Caco-2 (cell line): ENCODE measurements at regions of chr19 and their contacts with region 1.

Region 1: GRCh38 chr19:37655689-37656371 is 565 bp upstream of the ZFP30 start:
- DNase-seq: peak; percentile 91 to 93
- H3K4me3 ChIP-seq: peak overlapping the region; percentile 100
- H3K4me3 Mint-ChIP-seq: peak overlapping the region; percentile 84
- H3K27ac Mint-ChIP-seq: peak overlapping the region; percentile 97
- H3K4me1 ChIP-seq: no peaks in the 10 kb centered on the region; the same call in 1 of the 2 replicates
- H3K4me1 Mint-ChIP-seq: peaks cover 20% of the 10 kb centered on the region
- H3K27me3 ChIP-seq: no peaks in the 10 kb centered on the region
- H3K27me3 Mint-ChIP-seq: no peaks in the 10 kb centered on the region
- CTCF ChIP-seq: peak in 1 of 2 experiments; percentile 19

Region 2: DNA sequence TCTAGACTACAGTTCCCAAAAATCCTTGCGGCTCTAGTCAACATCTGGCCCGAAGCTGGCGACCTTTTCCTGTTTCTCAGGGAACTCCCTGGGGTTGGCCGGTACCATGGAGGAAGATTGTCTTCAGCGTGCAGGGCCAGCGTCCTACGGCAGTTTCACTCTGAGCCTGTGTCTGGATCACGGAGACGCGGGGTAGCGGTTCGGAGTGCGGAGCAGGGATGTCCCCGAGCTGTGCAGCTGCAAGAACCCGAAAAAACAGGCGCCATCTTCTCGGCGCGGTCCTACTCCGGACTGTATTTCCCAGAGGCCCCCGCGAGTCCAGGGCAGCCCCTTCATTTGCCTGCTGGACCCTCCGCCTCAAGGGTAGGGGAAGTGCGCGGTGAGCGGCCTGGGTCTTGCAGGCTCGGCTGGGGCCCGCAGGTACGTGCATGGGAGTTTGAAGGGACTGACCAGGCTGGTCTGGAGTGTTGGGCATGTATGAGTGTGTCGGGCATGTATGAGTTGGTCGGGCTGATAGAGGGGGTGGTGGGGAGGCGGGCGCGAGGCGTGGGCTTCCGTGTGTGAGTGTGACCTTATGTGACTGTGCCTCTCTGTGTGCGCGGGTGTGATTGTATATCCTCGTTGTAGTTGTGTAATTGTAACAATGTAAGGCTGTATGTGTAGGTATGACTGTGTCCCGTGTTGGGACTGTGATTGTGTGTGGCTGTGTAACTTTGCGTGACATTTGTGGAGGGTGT is 437.8 kb before region 1 on chr19 and contains the start of gene ZNF383:
- CTCF ChIA-PET with region 1: no interaction called
- POLR2A ChIA-PET with region 1: no interaction called
- intact Hi-C with region 1: loop called (anchors 5 kb)
- DNase-seq: peak; percentile 94 to 96
- H3K4me3 ChIP-seq: peak within 1 kb of the TSS; percentile 88
- H3K4me3 Mint-ChIP-seq: peak within 1 kb of the TSS; percentile 86
- H3K27ac Mint-ChIP-seq: peak within 1 kb of the TSS; percentile 92
- H3K4me1 ChIP-seq: no peaks in the 10 kb centered on the region
- H3K4me1 Mint-ChIP-seq: peaks cover 11% of the 10 kb centered on the region
- H3K27me3 ChIP-seq: no peaks in the 10 kb centered on the region
- H3K27me3 Mint-ChIP-seq: no peaks in the 10 kb centered on the region
- CTCF ChIP-seq: no peak
- total RNA-seq, gene ZNF383: 4.4 and 5.5 TPM in 2 replicates

Region 3: GRCh38 chr19:37413243-37414084 is 242.4 kb before region 1 on chr19:
- CTCF ChIA-PET with region 1: no interaction called
- POLR2A ChIA-PET with region 1: no interaction called
- intact Hi-C with region 1: no loop called
- DNase-seq: no peak
- H3K4me3 ChIP-seq: no peak overlapping the region
- H3K4me3 Mint-ChIP-seq: no peak overlapping the region
- H3K27ac Mint-ChIP-seq: no peak overlapping the region
- H3K4me1 ChIP-seq: no peaks in the 10 kb centered on the region
- H3K4me1 Mint-ChIP-seq: no peaks in the 10 kb centered on the region
- H3K27me3 ChIP-seq: no peaks in the 10 kb centered on the region
- H3K27me3 Mint-ChIP-seq: no peaks in the 10 kb centered on the region
- CTCF ChIP-seq: no peak

Region 4: DNA sequence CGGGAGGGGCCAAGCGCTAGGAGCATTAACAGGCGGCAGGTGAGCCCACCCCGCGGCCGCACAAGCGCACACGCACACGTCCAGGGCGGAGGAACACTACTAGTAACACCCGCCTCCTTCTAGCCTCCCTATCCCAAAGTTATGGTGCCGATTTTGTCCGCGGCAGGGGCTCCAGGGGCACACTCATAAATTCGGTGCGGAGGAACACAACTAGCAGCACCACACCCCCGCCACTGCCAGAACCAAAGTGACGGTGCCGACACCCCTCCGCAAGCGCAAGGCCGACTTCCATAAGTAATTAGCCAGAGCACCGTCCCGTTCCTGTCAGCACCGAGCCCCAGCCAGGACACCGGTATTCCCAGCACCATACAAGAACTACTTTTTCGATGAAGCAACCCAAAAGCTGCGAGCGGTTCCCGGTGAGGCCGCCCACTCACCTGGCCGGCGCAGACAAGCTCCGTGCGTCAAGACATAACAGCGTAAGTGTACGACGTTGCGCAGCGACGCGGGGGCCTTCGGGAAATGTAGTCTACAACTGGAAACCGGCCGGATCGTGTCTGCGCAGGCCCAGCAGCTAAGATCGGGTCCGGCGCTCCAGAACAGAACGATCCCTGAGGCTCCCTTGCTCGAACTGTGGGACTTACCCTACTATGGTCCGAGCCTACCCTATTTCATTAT is 61.4 kb before region 1 on chr19 and contains the starts of genes ZNF540 and ZNF571:
- CTCF ChIA-PET with region 1: no interaction called
- POLR2A ChIA-PET with region 1: no interaction called
- intact Hi-C with region 1: loop called (anchors 1 kb)
- DNase-seq: peak; percentile 93 to 95
- H3K4me3 ChIP-seq: peak within 1 kb of the TSS; percentile 73
- H3K4me3 Mint-ChIP-seq: peak within 1 kb of the TSS; percentile 95
- H3K27ac Mint-ChIP-seq: peak within 1 kb of the TSS; percentile 98
- H3K4me1 ChIP-seq: no peaks in the 10 kb centered on the region
- H3K4me1 Mint-ChIP-seq: peaks cover 15% of the 10 kb centered on the region
- H3K27me3 ChIP-seq: no peaks in the 10 kb centered on the region
- H3K27me3 Mint-ChIP-seq: no peaks in the 10 kb centered on the region
- CTCF ChIP-seq: no peak
- total RNA-seq, gene ZNF540: 0.36 TPM in 1 of 2 replicates, not detected in the other
- total RNA-seq, gene ZNF571: 1.4 and 3.6 TPM in 2 replicates

Region 5: DNA sequence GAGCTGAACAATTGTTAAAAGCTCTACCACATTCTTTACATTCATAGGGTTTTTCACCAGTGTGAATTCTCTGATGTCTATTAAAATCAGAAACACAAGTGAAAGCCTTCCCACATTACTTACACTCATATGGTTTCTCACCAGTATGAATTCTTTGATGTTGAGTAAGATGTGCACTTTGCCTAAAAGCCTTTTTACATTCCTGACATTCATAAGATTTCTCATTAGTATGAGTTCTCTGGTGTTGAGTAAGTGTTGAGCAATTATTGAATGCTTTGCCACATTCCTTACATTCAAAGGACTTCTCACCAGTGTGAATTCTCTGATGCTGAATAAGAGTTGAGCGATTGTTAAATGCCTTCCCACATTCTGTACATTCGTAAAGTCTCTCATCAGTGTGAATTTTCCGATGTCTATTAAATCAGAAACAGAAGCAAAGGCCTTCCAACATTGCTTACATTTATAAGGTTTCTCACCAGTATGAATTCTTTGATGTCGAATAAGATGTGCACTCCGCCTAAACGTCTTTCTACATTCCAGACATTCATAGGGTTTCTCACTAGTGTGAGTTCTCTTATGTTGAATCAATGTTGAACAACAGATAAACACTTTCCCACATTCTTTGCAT is 13.6 kb after region 1 on chr19:
- CTCF ChIA-PET with region 1: no interaction called
- POLR2A ChIA-PET with region 1: no interaction called
- intact Hi-C with region 1: no loop called
- DNase-seq: no peak
- H3K4me3 ChIP-seq: no peak overlapping the region
- H3K4me3 Mint-ChIP-seq: no peak overlapping the region
- H3K27ac Mint-ChIP-seq: no peak overlapping the region
- H3K4me1 ChIP-seq: no peaks in the 10 kb centered on the region
- H3K4me1 Mint-ChIP-seq: no peaks in the 10 kb centered on the region
- H3K27me3 ChIP-seq: no peaks in the 10 kb centered on the region
- H3K27me3 Mint-ChIP-seq: no peaks in the 10 kb centered on the region
- CTCF ChIP-seq: no peak

Region 6: GRCh38 chr19:37719111-37719926 is 63.5 kb after region 1 on chr19 and contains the start of gene ZNF607:
- CTCF ChIA-PET with region 1: no interaction called
- POLR2A ChIA-PET with region 1: no interaction called
- intact Hi-C with region 1: loop called (anchors 2 kb)
- DNase-seq: peak; percentile 96 to 97
- H3K4me3 ChIP-seq: peak within 1 kb of the TSS; percentile 60
- H3K4me3 Mint-ChIP-seq: peak within 1 kb of the TSS; percentile 96
- H3K27ac Mint-ChIP-seq: peak within 1 kb of the TSS; percentile 91
- H3K4me1 ChIP-seq: 0 out of 2 replicates have a peak, but pooled peaks cover 3% of the 10 kb centered on the region
- H3K4me1 Mint-ChIP-seq: peaks cover 12% of the 10 kb centered on the region
- H3K27me3 ChIP-seq: no peaks in the 10 kb centered on the region
- H3K27me3 Mint-ChIP-seq: no peaks in the 10 kb centered on the region
- CTCF ChIP-seq: peak; percentile 80 to 84
- total RNA-seq, gene ZNF607: 14.5 and 15.4 TPM in 2 replicates

Region 7: GRCh38 chr19:37779127-37780005 is 123.5 kb after region 1 on chr19 and contains the start of gene ZNF573:
- CTCF ChIA-PET with region 1: no interaction called
- POLR2A ChIA-PET with region 1: no interaction called
- intact Hi-C with region 1: loop called (anchors 2 kb)
- DNase-seq: peak; percentile 86 to 90
- H3K4me3 ChIP-seq: peak within 1 kb of the TSS; percentile 86
- H3K4me3 Mint-ChIP-seq: peak within 1 kb of the TSS; percentile 92
- H3K27ac Mint-ChIP-seq: peak within 1 kb of the TSS; percentile 97
- H3K4me1 ChIP-seq: no peaks in the 10 kb centered on the region
- H3K4me1 Mint-ChIP-seq: peaks cover 7% of the 10 kb centered on the region
- H3K27me3 ChIP-seq: no peaks in the 10 kb centered on the region
- H3K27me3 Mint-ChIP-seq: no peaks in the 10 kb centered on the region
- CTCF ChIP-seq: no peak
- total RNA-seq, gene ZNF573: 6.9 and 9.1 TPM in 2 replicates